HCT116 (cell line): ENCODE measurements at regions of chr17 and their contacts with region 1.

Region 1: DNA sequence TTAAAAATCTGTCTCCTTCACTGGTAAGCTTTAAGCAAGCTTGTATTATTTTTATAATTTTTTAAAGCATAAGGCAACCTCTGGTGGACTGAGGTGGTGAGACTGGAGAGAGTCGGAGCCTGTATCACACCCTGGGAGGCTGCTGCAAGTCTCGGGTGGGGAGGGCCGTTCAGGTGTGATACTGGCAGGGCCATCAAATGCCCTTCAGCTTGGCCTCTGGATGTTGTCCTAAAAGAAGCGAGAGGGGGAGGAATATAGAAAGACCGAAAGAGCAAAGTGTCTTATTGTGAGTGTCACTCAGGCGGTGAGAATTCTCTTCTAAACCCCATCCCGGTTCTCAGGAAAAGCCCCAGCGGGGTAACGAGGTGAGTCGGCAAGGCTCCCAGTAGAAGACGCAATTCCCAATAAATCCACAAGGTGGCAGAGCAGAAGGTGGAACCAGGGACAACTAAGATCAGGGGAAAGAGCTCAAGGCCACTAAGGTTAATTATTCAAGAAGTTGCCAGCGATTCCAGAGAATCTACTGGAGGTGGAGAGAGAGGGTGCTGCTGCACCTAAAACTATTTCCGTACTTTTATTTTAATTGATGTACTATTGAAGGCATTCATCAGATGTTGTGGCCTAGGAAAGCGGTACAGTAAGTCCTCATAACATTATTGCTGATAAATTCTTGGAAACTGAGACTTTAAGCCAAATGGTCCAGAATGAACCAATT is 14.1 kb downstream of the C17orf67 start:
- DNase-seq: peak; percentile 85
- ATAC-seq: peak; percentile 97
- H3K4me3 ChIP-seq: peak overlapping the region; percentile 25 to 29
- H3K27ac ChIP-seq: no peak overlapping the region
- H3K4me1 ChIP-seq: peaks cover 3 to 9% of the 10 kb centered on the region in 2 experiments
- H3K27me3 ChIP-seq: no peaks in the 10 kb centered on the region
- CTCF ChIP-seq: peak; percentile 80 to 95 (median 93)
- POLR2A ChIP-seq: no peak
- RAD21 ChIP-seq: peak; percentile 94

Region 2: GRCh38 chr17:56786989-56787482 is 32.6 kb before region 1 on chr17:
- CTCF ChIA-PET with region 1: interaction called, 14 read pairs
- POLR2A ChIA-PET with region 1: interaction called, 3 read pairs
- RAD21 ChIA-PET with region 1: interaction called in 1 of 2 experiments, 3 read pairs
- intact Hi-C with region 1: no loop called
- DNase-seq: peak; percentile 90
- ATAC-seq: peak; percentile 94
- H3K4me3 ChIP-seq: peak overlapping the region in 1 of 2 experiments; percentile 8; a peak in 1 of 4 replicates
- H3K27ac ChIP-seq: peak overlapping the region; percentile 16; the same call in 1 of the 2 replicates
- H3K4me1 ChIP-seq: peaks cover 26 to 28% of the 10 kb centered on the region in 2 experiments
- H3K27me3 ChIP-seq: no peaks in the 10 kb centered on the region
- CTCF ChIP-seq: no peak
- POLR2A ChIP-seq: no peak
- RAD21 ChIP-seq: peak; percentile 7; the same call in 1 of the 2 replicates

Region 3: DNA sequence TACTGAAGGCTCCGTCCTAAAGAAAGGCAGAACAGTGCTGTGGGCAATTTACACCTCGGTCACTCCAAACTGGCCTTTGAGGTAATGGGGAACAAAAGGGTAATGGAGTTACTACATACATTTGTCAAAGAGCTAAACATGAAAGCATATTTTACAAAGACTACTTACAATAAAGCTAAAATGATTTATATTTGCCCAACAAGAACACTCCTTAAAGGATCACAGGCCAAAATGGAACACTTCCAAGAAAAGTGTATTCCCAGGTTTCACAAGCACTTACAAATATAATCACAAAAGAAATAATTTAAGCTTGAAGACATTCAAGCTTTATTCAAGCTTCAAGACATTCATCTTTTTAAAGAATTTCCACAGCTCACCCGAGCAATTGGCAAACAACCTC is 15.1 kb before region 1 on chr17:
- CTCF ChIA-PET with region 1: interaction called, 11 read pairs
- POLR2A ChIA-PET with region 1: no interaction called
- RAD21 ChIA-PET with region 1: no interaction called
- intact Hi-C with region 1: no loop called
- DNase-seq: no peak
- ATAC-seq: no peak
- H3K4me3 ChIP-seq: no peak overlapping the region
- H3K27ac ChIP-seq: no peak overlapping the region
- H3K4me1 ChIP-seq: no peaks in the 10 kb centered on the region
- H3K27me3 ChIP-seq: no peaks in the 10 kb centered on the region
- CTCF ChIP-seq: no peak
- POLR2A ChIP-seq: no peak
- RAD21 ChIP-seq: no peak

Region 4: GRCh38 chr17:56913864-56914640 is 94.5 kb after region 1 on chr17 and contains the start of gene TRIM25:
- CTCF ChIA-PET with region 1: interaction called, 6 read pairs
- POLR2A ChIA-PET with region 1: interaction called, 17 read pairs
- RAD21 ChIA-PET with region 1: interaction called, 3 read pairs
- intact Hi-C with region 1: no loop called
- DNase-seq: peak; percentile 81
- ATAC-seq: peak; percentile 86
- H3K4me3 ChIP-seq: peak within 1 kb of the TSS; percentile 56 to 85
- H3K27ac ChIP-seq: peak within 1 kb of the TSS; percentile 63
- H3K4me1 ChIP-seq: peaks cover 27 to 50% of the 10 kb centered on the region in 2 experiments
- H3K27me3 ChIP-seq: no peaks in the 10 kb centered on the region
- CTCF ChIP-seq: no peak
- POLR2A ChIP-seq: peak; percentile 99
- RAD21 ChIP-seq: no peak
- total RNA-seq, gene TRIM25: 135 TPM

Region 5: GRCh38 chr17:57009737-57010445 is 190.3 kb after region 1 on chr17:
- CTCF ChIA-PET with region 1: no interaction called
- POLR2A ChIA-PET with region 1: no interaction called
- RAD21 ChIA-PET with region 1: no interaction called
- intact Hi-C with region 1: loop called (anchors 1 kb)
- DNase-seq: peak; percentile 61
- ATAC-seq: peak; percentile 98
- H3K4me3 ChIP-seq: no peak overlapping the region
- H3K27ac ChIP-seq: no peak overlapping the region
- H3K4me1 ChIP-seq: no peaks in the 10 kb centered on the region
- H3K27me3 ChIP-seq: no peaks in the 10 kb centered on the region
- CTCF ChIP-seq: peak; percentile 48 to 90 (median 88); a peak in 5 of 6 replicates
- POLR2A ChIP-seq: no peak
- RAD21 ChIP-seq: peak; percentile 70